ENCODE measurements at regions of chr4 and their contacts with region 1.

Region 1: GRCh38 chr4:6695660-6696630 is 2.3 kb downstream of the S100P start:
- DNase-seq: peak in 8 of 9 donors; percentile 53 to 82 (median 75)
- ATAC-seq: peak; percentile 89
- H3K4me3 ChIP-seq: peak overlapping the region; percentile 17
- H3K4me3 Mint-ChIP-seq: peak overlapping the region; percentile 42 to 84 (median 74)
- H3K27ac ChIP-seq: peak overlapping the region; percentile 77
- H3K27ac Mint-ChIP-seq: peak overlapping the region; percentile 93 to 99 (median 97)
- H3K4me1 ChIP-seq: peaks cover 84 to 85% of the 10 kb centered on the region in 2 donors
- H3K4me1 Mint-ChIP-seq: peaks cover 59 to 89% (median 82%) of the 10 kb centered on the region in 7 donors
- H3K27me3 ChIP-seq: no peaks in the 10 kb centered on the region
- H3K27me3 Mint-ChIP-seq: no peaks in the 10 kb centered on the region

Region 2: DNA sequence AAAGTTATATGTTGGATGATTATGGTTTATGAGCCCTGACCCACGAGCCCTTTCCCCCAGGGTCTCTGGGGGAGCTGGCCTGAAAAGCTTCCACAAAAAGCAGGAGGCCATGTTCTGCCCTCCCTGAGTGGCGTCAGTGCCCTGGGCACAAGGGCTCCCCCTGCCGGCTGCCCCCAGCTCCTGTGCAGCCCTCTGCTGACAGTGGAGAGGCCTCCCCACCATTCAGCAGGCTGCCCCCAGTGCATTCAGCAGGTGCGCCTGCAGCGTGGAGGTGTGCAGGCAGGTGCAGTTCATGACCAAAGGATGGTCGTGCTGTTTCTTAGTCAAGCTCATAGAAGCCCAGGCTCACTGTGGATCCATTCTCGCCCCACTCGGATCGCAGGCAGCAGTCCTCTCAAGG is 14.8 kb before region 1 on chr4:
- CTCF ChIA-PET with region 1: interaction called, 61 read pairs
- POLR2A ChIA-PET with region 1: interaction called, 696 read pairs
- intact Hi-C with region 1: no loop called
- DNase-seq: no peak
- ATAC-seq: no peak
- H3K4me3 ChIP-seq: no peak overlapping the region
- H3K4me3 Mint-ChIP-seq: no peak overlapping the region
- H3K27ac ChIP-seq: no peak overlapping the region
- H3K27ac Mint-ChIP-seq: peak overlapping the region in 5 of 9 donors; percentile 28 to 70 (median 51)
- H3K4me1 ChIP-seq: peaks cover 16 to 24% of the 10 kb centered on the region in 2 donors
- H3K4me1 Mint-ChIP-seq: peaks cover 19 to 50% (median 38%) of the 10 kb centered on the region in 7 donors
- H3K27me3 ChIP-seq: no peaks in the 10 kb centered on the region
- H3K27me3 Mint-ChIP-seq: no peaks in the 10 kb centered on the region

Region 3: GRCh38 chr4:6963139-6963611 is 267.2 kb after region 1 on chr4:
- CTCF ChIA-PET with region 1: no interaction called
- POLR2A ChIA-PET with region 1: no interaction called
- intact Hi-C with region 1: no loop called
- DNase-seq: no peak
- ATAC-seq: no peak
- H3K4me3 ChIP-seq: no peak overlapping the region
- H3K4me3 Mint-ChIP-seq: no peak overlapping the region
- H3K27ac ChIP-seq: no peak overlapping the region
- H3K27ac Mint-ChIP-seq: no peak overlapping the region
- H3K4me1 ChIP-seq: peaks cover 0 to 7% of the 10 kb centered on the region in 2 donors
- H3K4me1 Mint-ChIP-seq: peaks cover 14 to 59% (median 52%) of the 10 kb centered on the region in 7 donors
- H3K27me3 ChIP-seq: no peaks in the 10 kb centered on the region
- H3K27me3 Mint-ChIP-seq: no peaks in the 10 kb centered on the region